CD4-positive, alpha-beta T cell (primary cell): ENCODE measurements at regions of chr7 and their contacts with region 1.

Region 1: GRCh38 chr7:131007394-131008330 is 273.7 kb upstream of the KLF14 start:
- DNase-seq: peak in 11 of 14 experiments; percentile 27 to 83 (median 48)
- ATAC-seq: peak; percentile 60
- H3K4me3 ChIP-seq: no peak overlapping the region
- H3K4me3 Mint-ChIP-seq: peak overlapping the region; percentile 40
- H3K27ac ChIP-seq: peak overlapping the region; percentile 36 to 71
- H3K27ac Mint-ChIP-seq: peak overlapping the region; percentile 76
- H3K4me1 ChIP-seq: peaks cover 61% of the 10 kb centered on the region
- H3K4me1 Mint-ChIP-seq: peaks cover 93% of the 10 kb centered on the region
- H3K27me3 ChIP-seq: no peaks in the 10 kb centered on the region
- H3K27me3 Mint-ChIP-seq: no peaks in the 10 kb centered on the region
- CTCF ChIP-seq: peak; percentile 77

Region 2: DNA sequence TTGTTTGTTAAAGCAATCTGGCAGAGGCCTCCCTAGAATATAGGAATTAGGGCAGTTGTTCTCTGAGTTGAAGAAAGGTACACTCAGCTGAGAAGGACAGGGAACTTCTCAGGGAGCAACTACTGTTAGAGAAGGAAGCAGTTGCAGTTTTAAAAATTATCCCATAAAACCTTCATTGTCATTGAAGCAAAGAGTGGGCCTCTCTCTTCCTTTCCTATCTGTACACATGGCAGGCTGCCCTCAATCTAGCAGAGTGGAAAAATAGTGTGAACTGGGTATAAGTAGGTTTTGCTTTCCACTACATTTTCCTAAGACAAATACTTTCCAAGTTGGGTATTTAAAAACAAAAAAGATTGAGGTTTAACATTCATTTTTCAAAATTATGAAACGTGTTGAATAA is 37.0 kb before region 1 on chr7:
- CTCF ChIA-PET with region 1: no interaction called
- POLR2A ChIA-PET with region 1: no interaction called
- intact Hi-C with region 1: loop called in 1 of 2 experiments (anchors 5 kb)
- DNase-seq: no peak
- ATAC-seq: no peak
- H3K4me3 ChIP-seq: no peak overlapping the region
- H3K4me3 Mint-ChIP-seq: no peak overlapping the region
- H3K27ac ChIP-seq: no peak overlapping the region
- H3K27ac Mint-ChIP-seq: peak overlapping the region; percentile 31
- H3K4me1 ChIP-seq: peaks cover 35% of the 10 kb centered on the region
- H3K4me1 Mint-ChIP-seq: peaks cover 85% of the 10 kb centered on the region
- H3K27me3 ChIP-seq: no peaks in the 10 kb centered on the region
- H3K27me3 Mint-ChIP-seq: no peaks in the 10 kb centered on the region
- CTCF ChIP-seq: no peak

Region 3: GRCh38 chr7:130990178-130990832 is 17.4 kb before region 1 on chr7:
- CTCF ChIA-PET with region 1: interaction called, 5 read pairs
- POLR2A ChIA-PET with region 1: interaction called, 4 read pairs
- intact Hi-C with region 1: loop called in 1 of 2 experiments (anchors 2 kb)
- DNase-seq: peak in 12 of 14 experiments; percentile 32 to 83 (median 48)
- ATAC-seq: peak; percentile 59
- H3K4me3 ChIP-seq: no peak overlapping the region
- H3K4me3 Mint-ChIP-seq: peak overlapping the region; percentile 18
- H3K27ac ChIP-seq: peak overlapping the region; percentile 62 to 88
- H3K27ac Mint-ChIP-seq: peak overlapping the region; percentile 87
- H3K4me1 ChIP-seq: peaks cover 95% of the 10 kb centered on the region
- H3K4me1 Mint-ChIP-seq: peaks cover 39% of the 10 kb centered on the region
- H3K27me3 ChIP-seq: no peaks in the 10 kb centered on the region
- H3K27me3 Mint-ChIP-seq: no peaks in the 10 kb centered on the region
- CTCF ChIP-seq: no peak